Psoas muscle (tissue), 8 donors: ENCODE measurements at regions of chr10 and their contacts with region 1.

Region 1: DNA sequence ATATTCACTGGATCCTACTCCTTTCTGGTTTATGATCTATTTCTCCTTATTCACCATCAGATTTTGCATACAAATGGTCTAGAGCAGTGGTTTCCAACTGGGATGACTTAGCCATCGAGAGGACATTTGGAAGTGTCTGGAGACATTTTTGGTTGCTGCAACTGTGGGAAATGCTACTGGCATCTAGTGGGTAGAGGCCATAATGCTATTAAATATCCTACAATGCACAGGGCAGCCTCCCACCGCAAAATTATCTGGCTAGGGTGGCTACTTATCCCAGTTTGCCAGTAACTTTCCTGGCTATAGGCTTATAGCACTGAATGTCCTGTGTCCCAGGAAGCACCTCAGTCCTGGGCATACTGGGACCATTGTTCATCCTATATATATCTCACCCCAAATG is 21.5 kb upstream of the DDX50 start:
- DNase-seq: no peak
- ATAC-seq: no peak
- H3K4me3 ChIP-seq: no peak overlapping the region
- H3K27ac ChIP-seq: no peak overlapping the region
- H3K4me1 ChIP-seq: no peaks in the 10 kb centered on the region
- H3K27me3 ChIP-seq: no peaks in the 10 kb centered on the region
- CTCF ChIP-seq: no peak

Region 2: DNA sequence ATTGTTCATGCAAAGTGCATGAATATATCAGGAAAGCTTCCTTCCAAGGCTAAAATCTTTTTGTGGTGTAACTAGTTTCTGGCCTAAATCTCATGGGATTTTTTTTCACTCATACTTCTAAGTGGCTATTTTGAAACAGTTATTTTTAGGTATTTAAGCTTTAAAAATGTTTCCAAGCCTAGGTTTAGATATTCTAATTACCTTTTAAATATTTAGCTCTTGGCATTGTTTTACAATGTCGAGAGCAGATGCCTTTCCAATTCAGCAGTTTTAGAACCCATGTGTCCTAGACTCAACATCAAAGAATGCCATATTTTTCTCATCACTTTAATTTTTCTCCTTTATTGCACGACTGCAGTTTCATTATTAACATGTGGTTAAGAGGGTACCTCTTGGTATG is 79.4 kb before region 1 on chr10:
- intact Hi-C with region 1: loop called in 1 of 2 experiments (anchors 5 kb)
- DNase-seq: no peak
- ATAC-seq: no peak
- H3K4me3 ChIP-seq: no peak overlapping the region
- H3K27ac ChIP-seq: no peak overlapping the region
- H3K4me1 ChIP-seq: no peaks in the 10 kb centered on the region
- H3K27me3 ChIP-seq: no peaks in the 10 kb centered on the region
- CTCF ChIP-seq: no peak